ENCODE measurements at regions of chr3 and their contacts with region 1.

Region 1: DNA sequence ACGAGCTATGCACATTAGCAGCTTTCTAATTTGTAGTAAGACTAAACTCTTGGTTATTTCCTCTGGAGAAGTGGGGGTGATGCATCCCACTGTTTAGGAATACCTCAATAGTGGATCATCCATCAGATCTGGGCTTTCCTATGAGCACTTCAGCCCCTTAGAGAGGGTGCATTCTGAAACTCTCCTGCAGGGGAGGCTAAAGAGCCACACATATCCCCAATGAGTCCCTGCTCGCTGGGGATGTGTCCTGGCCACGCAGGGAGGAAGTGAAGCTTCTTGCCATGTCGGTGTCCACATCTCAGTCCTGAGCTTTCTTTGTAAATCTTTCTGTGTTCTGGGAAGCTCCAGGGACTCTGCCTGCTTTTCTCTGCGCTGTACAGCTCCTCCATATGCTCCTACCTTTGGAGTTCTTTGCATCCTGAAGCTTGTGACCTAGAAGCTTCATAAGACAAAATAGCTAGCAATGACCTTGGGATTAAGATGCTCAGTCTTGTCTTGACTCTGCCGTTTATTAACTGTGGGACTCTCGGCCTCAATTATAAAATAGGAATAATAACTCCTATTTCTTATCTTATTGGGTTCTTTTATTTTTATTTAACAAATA is 28.3 kb upstream of the MASP1 start:
- DNase-seq: peak; percentile 12 to 50
- ATAC-seq: peak; percentile 63 to 83
- H3K4me3 ChIP-seq: no peak overlapping the region
- H3K27ac ChIP-seq: no peak overlapping the region
- H3K4me1 ChIP-seq: peaks cover 0 to 4% of the 10 kb centered on the region in 2 donors
- H3K27me3 ChIP-seq: no peaks in the 10 kb centered on the region
- CTCF ChIP-seq: peak; percentile 37 to 76 (median 62)
- POLR2A ChIP-seq: no peak

Region 2: DNA sequence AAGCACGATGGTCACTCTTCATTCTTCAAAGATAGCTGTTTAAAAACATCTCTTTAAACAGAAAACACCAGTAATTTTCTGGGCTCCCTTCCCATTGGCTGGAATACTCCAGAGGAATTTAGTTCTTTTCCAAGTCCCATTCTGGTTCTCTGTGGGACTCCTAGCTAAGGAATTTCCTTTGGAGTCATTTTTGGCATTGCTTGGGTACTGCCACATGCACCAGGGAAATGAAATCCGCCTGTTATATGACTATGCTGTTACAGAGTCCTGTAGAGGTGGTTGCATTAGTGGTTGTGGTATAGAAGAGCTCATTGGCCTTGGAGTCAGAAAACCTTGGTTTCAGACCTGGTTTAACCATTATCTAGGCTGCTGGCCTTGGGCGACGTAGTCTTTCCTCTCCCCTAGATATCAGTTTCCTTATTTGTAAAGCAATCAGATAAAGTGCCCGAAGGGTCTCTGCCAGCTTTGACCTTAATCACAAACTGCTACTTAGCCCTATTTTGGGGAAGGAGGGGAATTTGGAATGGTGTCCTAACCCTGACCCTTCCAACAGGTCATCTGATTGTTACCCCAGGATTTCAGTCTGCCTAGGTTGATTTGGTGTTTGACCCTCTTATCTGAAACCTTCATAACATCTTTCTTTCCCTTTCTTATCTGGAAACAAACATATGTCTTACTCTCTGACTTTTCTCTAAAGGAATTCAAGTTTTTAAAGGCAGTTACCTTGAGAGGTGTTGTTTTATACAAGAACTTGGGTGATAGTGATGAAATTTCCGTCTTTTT is 109.1 kb before region 1 on chr3:
- in situ Hi-C with region 1: loop called in 1 of 4 experiments (anchors 25 kb)
- intact Hi-C with region 1: no loop called
- DNase-seq: no peak
- ATAC-seq: peak in 1 of 2 donors; percentile 64
- H3K4me3 ChIP-seq: no peak overlapping the region
- H3K27ac ChIP-seq: no peak overlapping the region
- H3K4me1 ChIP-seq: peaks cover 16 to 28% of the 10 kb centered on the region in 2 donors
- H3K27me3 ChIP-seq: no peaks in the 10 kb centered on the region
- CTCF ChIP-seq: no peak
- POLR2A ChIP-seq: no peak

Region 3: GRCh38 chr3:187281191-187281714 is 38.5 kb before region 1 on chr3:
- in situ Hi-C with region 1: no loop called
- intact Hi-C with region 1: no loop called
- DNase-seq: no peak
- ATAC-seq: no peak
- H3K4me3 ChIP-seq: no peak overlapping the region
- H3K27ac ChIP-seq: no peak overlapping the region
- H3K4me1 ChIP-seq: no peaks in the 10 kb centered on the region
- H3K27me3 ChIP-seq: no peaks in the 10 kb centered on the region
- CTCF ChIP-seq: no peak
- POLR2A ChIP-seq: no peak

Region 4: GRCh38 chr3:187473778-187474406 is 154.1 kb after region 1 on chr3:
- in situ Hi-C with region 1: no loop called
- intact Hi-C with region 1: no loop called
- DNase-seq: no peak
- ATAC-seq: no peak
- H3K4me3 ChIP-seq: no peak overlapping the region
- H3K27ac ChIP-seq: no peak overlapping the region
- H3K4me1 ChIP-seq: no peaks in the 10 kb centered on the region
- H3K27me3 ChIP-seq: no peaks in the 10 kb centered on the region
- CTCF ChIP-seq: no peak
- POLR2A ChIP-seq: no peak

Region 5: GRCh38 chr3:187616307-187616972 is 296.6 kb after region 1 on chr3:
- in situ Hi-C with region 1: no loop called
- intact Hi-C with region 1: loop called (anchors 1 kb)
- DNase-seq: peak in 1 of 2 donors; percentile 26
- ATAC-seq: peak; percentile 50 to 56
- H3K4me3 ChIP-seq: no peak overlapping the region
- H3K27ac ChIP-seq: no peak overlapping the region
- H3K4me1 ChIP-seq: no peaks in the 10 kb centered on the region
- H3K27me3 ChIP-seq: no peaks in the 10 kb centered on the region
- CTCF ChIP-seq: peak; percentile 37 to 78 (median 70)
- POLR2A ChIP-seq: no peak

Region 6: DNA sequence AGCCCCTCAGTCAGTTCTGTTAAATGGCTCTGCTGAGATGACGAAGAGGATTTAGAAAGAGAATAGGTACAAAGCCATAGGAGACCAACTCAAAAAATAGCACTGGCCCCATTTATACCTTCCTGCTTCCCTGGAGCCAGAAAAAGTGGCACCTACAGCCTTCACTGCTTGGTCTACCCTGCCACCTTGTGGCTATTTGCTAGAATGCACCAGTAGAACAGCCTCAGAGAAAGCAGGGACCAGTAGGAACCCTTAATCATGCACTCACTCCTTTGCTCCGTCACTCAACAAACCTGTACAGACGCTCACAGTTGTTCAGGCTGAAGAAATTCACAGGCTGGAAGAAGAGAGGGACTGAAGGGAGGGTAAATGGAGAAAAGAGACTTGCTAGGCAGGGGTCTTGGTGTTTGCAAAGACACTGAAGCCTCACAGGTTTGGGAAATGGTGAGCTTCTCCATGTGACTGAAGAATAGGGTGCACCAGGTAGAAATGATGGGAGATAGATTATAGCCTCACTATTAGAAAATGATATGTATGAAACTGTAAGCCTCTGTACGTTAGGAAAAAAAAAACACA is 394.7 kb after region 1 on chr3:
- in situ Hi-C with region 1: loop called in 3 of 4 experiments (anchors 5 to 10 kb)
- intact Hi-C with region 1: loop called (anchors 1 kb)
- DNase-seq: peak; percentile 60 to 80
- ATAC-seq: peak; percentile 70 to 82
- H3K4me3 ChIP-seq: no peak overlapping the region
- H3K27ac ChIP-seq: peak overlapping the region in 3 of 4 donors; percentile 43 to 67 (median 47)
- H3K4me1 ChIP-seq: peaks cover 17 to 24% of the 10 kb centered on the region in 2 donors
- H3K27me3 ChIP-seq: no peaks in the 10 kb centered on the region
- CTCF ChIP-seq: peak; percentile 94 to 96 (median 95)
- POLR2A ChIP-seq: no peak

Region 7: DNA sequence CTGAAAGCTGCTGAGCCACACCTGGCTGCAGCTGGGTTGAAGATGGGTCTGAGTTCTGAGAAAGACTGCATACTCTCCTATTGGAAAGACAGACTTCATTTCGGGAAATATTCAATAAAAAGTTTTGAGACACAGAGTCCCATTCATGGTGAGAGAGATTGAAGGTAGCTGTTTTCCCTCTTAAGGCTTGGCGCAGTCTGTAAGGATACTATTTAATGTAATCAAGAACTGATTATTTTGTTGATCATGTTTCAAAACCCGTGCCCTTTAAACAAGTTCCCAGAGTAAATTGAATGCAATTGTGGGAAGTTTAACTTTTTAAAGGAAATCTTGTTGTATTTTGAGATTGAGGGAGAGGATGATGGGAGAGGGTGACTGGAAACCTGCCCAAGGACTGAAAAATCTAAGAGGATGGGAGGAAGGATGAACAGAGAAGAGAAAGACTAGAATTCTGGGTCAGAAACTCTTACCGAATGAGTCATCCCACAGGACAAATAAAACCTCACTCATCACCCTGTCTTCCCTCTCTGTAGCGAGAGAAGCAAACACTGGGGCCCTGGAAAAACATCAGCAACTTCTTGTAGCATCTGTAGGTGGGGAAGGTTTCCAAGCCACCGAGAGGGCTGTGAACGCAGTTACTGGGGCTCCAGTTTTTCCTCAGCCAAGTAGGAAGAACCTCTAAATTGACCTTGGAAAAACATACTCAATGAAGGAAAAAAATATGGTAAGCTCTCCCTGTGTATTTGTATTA is 1658.8 kb after region 1 on chr3:
- in situ Hi-C with region 1: loop called in 1 of 4 experiments (anchors 25 kb)
- intact Hi-C with region 1: no loop called
- DNase-seq: peak in 1 of 2 donors; percentile 6
- ATAC-seq: peak; percentile 34 to 47
- H3K4me3 ChIP-seq: no peak overlapping the region
- H3K27ac ChIP-seq: peak overlapping the region; percentile 27 to 51 (median 37)
- H3K4me1 ChIP-seq: no peaks in the 10 kb centered on the region
- H3K27me3 ChIP-seq: no peaks in the 10 kb centered on the region
- CTCF ChIP-seq: no peak
- POLR2A ChIP-seq: no peak